Activated T-helper 2 cell treated with anti-CD3 and anti-CD28 coated beads, Interferon-gamma antibody, Interleukin-2, Interleukin-4, amounts not matched to agents 10 μg/mL and 5 μg/mL and 100 μg/mL, durations not matched to agents 14 hours and 24 hours and 36 hours (primary cell): ENCODE measurements at regions of chr16 and their contacts with region 1.

Region 1: GRCh38 chr16:48409839-48410611 is 24.8 kb upstream of the SIAH1 start:
- DNase-seq: no peak
- H3K4me3 Mint-ChIP-seq: no peak overlapping the region
- H3K27ac Mint-ChIP-seq: no peak overlapping the region
- H3K4me1 Mint-ChIP-seq: peaks cover 5% of the 10 kb centered on the region
- H3K27me3 Mint-ChIP-seq: peaks cover 6% of the 10 kb centered on the region

Region 2: GRCh38 chr16:48459167-48459566 is 49.1 kb after region 1 on chr16:
- intact Hi-C with region 1: loop called (anchors 5 kb)
- DNase-seq: no peak
- H3K4me3 Mint-ChIP-seq: no peak overlapping the region
- H3K27ac Mint-ChIP-seq: no peak overlapping the region
- H3K4me1 Mint-ChIP-seq: peaks cover 15% of the 10 kb centered on the region
- H3K27me3 Mint-ChIP-seq: peaks cover 39% of the 10 kb centered on the region